ENCODE measurements at regions of chr9 and their contacts with region 1.

Region 1: GRCh38 chr9:130785940-130786508 is 49.0 kb upstream of the ABL1 start:
- DNase-seq: no peak
- ATAC-seq: no peak
- H3K4me3 ChIP-seq: no peak overlapping the region
- H3K27ac ChIP-seq: no peak overlapping the region
- H3K4me1 ChIP-seq: peaks cover 10% of the 10 kb centered on the region; the same call in 1 of the 2 replicates
- H3K27me3 ChIP-seq: no peaks in the 10 kb centered on the region
- CTCF ChIP-seq: no peak
- EP300 ChIP-seq: no peak
- POLR2A ChIP-seq: no peak
- RAD21 ChIP-seq: no peak

Region 2: DNA sequence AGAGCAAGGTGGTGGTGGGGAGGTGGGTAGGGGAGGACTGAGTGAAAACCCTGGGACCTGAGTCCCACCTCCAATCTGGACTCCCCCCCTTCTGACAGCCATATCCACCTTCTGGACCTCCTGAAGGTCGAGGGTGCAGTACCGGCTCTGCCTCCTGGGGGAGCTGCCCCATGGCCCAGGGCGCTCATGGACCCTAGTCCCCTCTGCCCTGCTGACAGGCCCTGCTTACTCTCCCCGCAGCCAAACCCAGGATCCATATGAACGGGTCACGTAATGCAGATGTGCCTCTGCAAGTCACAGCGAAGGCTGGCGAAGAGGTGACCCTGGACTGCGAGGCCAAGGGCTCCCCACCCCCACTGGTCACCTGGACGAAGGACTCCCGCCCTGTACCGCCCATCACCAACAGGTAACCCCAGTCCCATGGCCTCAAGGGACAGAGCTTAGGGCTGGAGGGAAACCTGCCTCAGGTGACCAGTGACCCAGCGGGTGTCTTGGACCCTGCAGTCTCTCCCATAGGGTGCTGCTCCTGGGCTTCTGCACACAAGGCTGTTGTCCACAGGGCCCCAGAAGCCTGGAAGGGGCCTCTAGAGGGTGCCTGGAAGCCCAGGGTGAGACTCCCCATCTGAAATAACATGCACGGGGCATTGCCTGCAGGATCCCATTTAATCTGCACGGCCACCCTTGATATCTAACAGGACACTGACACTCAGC is 458.8 kb before region 1 on chr9:
- CTCF ChIA-PET with region 1: no interaction called
- POLR2A ChIA-PET with region 1: no interaction called
- in situ Hi-C with region 1: no loop called
- intact Hi-C with region 1: no loop called
- DNase-seq: no peak
- ATAC-seq: peak; percentile 77
- H3K4me3 ChIP-seq: no peak overlapping the region
- H3K27ac ChIP-seq: no peak overlapping the region
- H3K4me1 ChIP-seq: peaks cover 12% of the 10 kb centered on the region
- H3K27me3 ChIP-seq: peaks cover 10 to 35% of the 10 kb centered on the region in 2 experiments; a peak in 4 of 5 replicates
- CTCF ChIP-seq: peak; percentile 57
- EP300 ChIP-seq: no peak
- POLR2A ChIP-seq: no peak
- RAD21 ChIP-seq: no peak

Region 3: GRCh38 chr9:130751631-130752355 is 34.2 kb before region 1 on chr9:
- CTCF ChIA-PET with region 1: no interaction called
- POLR2A ChIA-PET with region 1: no interaction called
- in situ Hi-C with region 1: no loop called
- intact Hi-C with region 1: loop called (anchors 5 kb)
- DNase-seq: no peak
- ATAC-seq: no peak
- H3K4me3 ChIP-seq: no peak overlapping the region
- H3K27ac ChIP-seq: no peak overlapping the region
- H3K4me1 ChIP-seq: no peaks in the 10 kb centered on the region
- H3K27me3 ChIP-seq: no peaks in the 10 kb centered on the region
- CTCF ChIP-seq: no peak
- EP300 ChIP-seq: no peak
- POLR2A ChIP-seq: no peak
- RAD21 ChIP-seq: no peak

Region 4: DNA sequence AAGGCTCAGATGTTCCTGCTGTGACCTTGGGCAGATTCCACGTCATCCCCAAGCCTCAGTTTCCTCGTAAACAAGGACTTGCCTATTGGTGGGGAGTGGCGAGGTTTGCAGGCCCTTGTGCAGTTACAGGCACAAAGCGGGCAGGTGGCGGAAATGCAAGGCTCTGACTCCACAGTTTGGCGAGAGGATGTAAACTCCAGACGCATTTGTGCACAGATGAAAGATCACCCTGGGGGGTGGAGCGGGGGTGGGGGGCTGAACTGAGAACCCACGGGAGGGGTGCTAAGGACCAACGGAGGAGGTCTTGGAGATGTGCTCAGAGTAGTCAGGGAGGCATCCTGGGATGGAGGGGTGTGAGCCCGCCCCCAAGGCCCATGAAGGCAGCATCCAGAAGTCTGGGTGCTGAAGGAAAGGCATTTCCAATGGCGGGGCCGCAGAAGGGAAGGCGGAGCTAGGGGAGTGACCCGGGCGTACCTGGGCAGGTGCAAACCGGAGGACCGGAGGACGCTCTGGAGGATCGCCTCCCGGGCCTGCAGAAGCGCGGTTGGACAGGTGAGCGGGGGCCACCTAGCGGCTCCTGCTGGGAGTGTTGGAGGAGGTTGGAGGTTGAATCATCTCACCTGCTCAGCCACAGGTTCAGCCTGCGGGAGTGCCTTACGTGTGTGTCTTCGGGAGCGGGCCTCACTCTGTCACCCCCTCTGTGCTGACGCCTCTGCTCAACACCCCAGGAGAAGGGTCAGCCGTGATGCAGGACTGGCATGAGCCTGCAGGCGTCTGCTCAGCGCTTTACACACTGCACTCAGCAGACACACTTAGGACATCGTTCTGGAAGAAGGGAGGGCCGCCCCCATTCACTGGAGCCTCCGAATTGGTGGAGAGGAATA is 154.9 kb after region 1 on chr9:
- CTCF ChIA-PET with region 1: no interaction called
- POLR2A ChIA-PET with region 1: no interaction called
- in situ Hi-C with region 1: no loop called
- intact Hi-C with region 1: no loop called
- DNase-seq: peak; percentile 47
- ATAC-seq: peak; percentile 75
- H3K4me3 ChIP-seq: no peak overlapping the region
- H3K27ac ChIP-seq: no peak overlapping the region
- H3K4me1 ChIP-seq: peaks cover 24% of the 10 kb centered on the region
- H3K27me3 ChIP-seq: peaks cover 11 to 87% of the 10 kb centered on the region in 2 experiments
- CTCF ChIP-seq: peak; percentile 94
- EP300 ChIP-seq: no peak
- POLR2A ChIP-seq: no peak
- RAD21 ChIP-seq: peak; percentile 87

Measured in HepG2 (cell line).